Transverse colon (tissue), 4 donors: ENCODE measurements at regions of chr18 and their contacts with region 1.

Region 1: DNA sequence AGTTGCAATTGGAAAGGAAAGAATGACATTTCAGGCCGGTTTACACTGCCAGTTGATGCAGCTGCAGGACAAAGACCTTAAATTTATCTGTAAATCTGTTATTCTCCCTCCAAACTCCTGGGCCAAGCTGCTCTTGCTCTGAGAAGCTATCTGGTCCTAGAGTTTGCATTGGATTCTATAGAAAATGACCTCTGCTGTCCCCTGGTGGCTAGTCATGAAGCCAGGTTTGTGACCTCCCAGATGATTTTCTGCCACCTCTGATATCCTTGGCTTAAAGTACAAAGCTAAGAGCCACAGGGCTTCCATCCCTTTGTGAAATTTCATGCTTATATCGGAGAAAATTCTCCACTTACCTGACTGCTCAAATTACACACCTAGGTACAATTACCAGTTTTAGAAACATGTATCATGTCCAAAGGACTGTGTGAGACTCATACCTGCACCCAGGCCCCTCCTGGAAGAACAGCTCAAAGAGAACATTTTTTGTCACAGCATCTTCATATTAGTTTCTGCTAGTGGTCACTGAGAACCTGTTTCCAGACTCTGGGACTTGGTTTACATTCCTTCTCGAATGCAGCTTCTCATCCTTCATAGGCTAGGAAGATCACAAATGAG is 28.9 kb upstream of the IER3IP1 start:
- DNase-seq: peak; percentile 21
- H3K4me3 ChIP-seq: no peak overlapping the region
- H3K27ac ChIP-seq: no peak overlapping the region
- H3K4me1 ChIP-seq: no peaks in the 10 kb centered on the region
- H3K27me3 ChIP-seq: peaks cover 23% of the 10 kb centered on the region
- CTCF ChIP-seq: peak; percentile 72 to 81 (median 77)
- EP300 ChIP-seq: no peak
- POLR2A ChIP-seq: no peak

Region 2: DNA sequence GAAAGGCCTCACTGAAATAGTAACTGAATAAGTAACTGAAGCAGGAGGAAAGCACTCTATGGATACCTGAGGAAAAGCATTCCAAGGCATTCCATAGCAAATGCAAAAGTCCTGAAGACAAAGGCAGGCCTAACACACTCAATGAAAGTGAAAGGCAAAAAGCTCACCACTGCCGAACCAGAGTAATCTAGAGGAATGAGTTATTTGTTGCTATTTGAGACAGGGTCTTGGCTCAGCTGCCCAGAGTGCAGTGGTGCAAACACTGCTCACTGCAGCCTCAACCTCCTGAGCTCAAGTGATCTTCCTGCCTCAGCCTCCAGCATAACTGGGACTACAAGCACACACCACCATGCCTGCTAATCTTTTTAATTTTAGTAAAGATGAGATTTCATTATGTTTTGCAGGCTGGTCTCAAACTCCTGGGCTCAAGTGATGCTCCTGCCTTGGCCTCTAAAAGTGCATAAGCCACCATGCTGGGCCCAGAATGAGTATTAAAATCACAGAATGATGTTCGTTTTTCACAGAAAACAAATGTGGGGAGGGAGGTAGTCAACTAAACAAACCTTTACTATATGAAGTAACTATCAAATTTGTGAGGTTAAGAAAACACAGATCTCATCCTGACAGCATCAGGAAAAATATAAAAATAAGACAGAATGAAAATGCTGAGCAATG is 305.6 kb before region 1 on chr18:
- in situ Hi-C with region 1: no loop called
- intact Hi-C with region 1: no loop called
- DNase-seq: no peak
- H3K4me3 ChIP-seq: no peak overlapping the region
- H3K27ac ChIP-seq: no peak overlapping the region
- H3K4me1 ChIP-seq: no peaks in the 10 kb centered on the region
- H3K27me3 ChIP-seq: no peaks in the 10 kb centered on the region
- CTCF ChIP-seq: no peak
- EP300 ChIP-seq: no peak
- POLR2A ChIP-seq: no peak

Region 3: DNA sequence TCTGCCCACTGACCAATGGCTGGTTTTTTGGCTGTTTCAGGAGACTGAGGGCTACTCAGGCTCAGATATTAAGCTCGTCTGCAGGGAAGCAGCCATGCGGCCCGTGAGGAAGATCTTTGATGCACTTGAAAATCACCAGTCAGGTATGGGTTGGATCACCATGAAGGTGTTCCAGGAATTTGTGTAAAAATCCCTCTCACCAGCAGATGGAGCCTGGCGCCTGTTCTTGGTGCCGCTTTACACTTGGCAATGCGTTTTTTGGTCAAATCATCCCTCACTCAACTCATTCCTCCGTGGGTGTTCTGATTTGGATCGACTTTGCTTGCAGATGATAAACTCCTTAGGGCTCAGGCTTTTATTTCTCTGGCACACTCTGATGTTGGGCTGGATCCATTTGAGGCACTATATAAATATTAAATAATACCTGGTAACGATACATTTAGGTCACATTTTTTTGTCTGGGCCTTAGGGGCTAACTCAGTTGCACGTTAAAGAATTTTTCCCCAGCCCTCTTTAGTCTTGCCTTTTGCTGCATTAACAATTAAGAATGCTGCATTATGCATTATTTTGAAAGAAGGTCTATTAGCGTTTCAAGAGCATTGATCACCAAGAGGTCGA is 104.7 kb before region 1 on chr18:
- in situ Hi-C with region 1: loop called in 3 of 4 experiments (anchors 5 to 10 kb)
- intact Hi-C with region 1: loop called (anchors 5 kb)
- DNase-seq: peak; percentile 31
- H3K4me3 ChIP-seq: no peak overlapping the region
- H3K27ac ChIP-seq: no peak overlapping the region
- H3K4me1 ChIP-seq: no peaks in the 10 kb centered on the region
- H3K27me3 ChIP-seq: no peaks in the 10 kb centered on the region
- CTCF ChIP-seq: peak; percentile 63 to 72 (median 64)
- EP300 ChIP-seq: no peak
- POLR2A ChIP-seq: no peak

Region 4: GRCh38 chr18:47756364-47757016 is 551.5 kb after region 1 on chr18:
- in situ Hi-C with region 1: loop called (anchors 10 to 25 kb)
- intact Hi-C with region 1: no loop called
- DNase-seq: peak; percentile 63
- H3K4me3 ChIP-seq: no peak overlapping the region
- H3K27ac ChIP-seq: no peak overlapping the region
- H3K4me1 ChIP-seq: no peaks in the 10 kb centered on the region
- H3K27me3 ChIP-seq: peaks cover 31% of the 10 kb centered on the region
- CTCF ChIP-seq: peak; percentile 69 to 90 (median 77)
- EP300 ChIP-seq: no peak
- POLR2A ChIP-seq: no peak